Tibial artery (tissue), 4 donors: ENCODE measurements at regions of chr11 and their contacts with region 1.

Region 1: DNA sequence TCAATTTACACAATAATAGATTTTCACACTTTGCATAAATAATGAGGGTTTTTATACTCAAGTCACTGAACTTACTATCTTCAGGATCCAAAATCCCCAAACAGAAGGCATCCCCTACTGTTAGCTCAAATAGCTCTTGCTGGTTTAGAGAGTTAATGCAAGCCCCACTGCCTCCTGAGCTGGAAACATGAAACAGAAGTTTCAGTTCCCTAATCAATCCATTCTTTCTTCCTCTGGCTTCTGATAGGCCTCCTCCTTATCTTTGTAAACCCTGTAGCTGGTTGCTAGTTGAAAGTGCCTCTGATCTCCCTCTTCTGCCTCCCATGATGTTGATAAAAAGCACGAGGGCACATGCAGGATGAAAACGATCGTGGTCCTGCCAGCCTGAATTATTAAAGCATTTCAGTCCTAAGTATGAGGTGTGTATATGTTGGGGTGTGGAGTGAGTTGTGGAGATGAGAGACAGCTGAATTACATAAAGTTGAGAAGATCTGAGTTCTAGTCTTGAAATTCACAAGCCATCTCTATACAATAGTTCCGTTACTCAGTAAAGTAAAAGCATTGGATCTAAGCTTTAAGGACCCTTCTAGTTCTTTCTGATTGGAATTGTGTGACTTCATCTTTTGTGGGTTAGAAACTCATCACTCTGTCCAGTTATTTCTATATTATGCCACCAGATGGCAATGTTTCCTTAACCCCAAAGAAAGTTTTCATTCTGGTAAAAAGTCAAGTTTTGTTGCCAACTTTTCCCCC is 35.0 kb upstream of the EHF start:
- DNase-seq: no peak
- H3K4me3 ChIP-seq: no peak overlapping the region
- H3K27ac ChIP-seq: no peak overlapping the region
- H3K4me1 ChIP-seq: peaks cover 0 to 8% (median 2%) of the 10 kb centered on the region in 4 donors
- H3K27me3 ChIP-seq: peaks cover 0 to 7% of the 10 kb centered on the region in 2 donors
- CTCF ChIP-seq: peak; percentile 60 to 75

Region 2: GRCh38 chr11:34449013-34449412 is 136.9 kb before region 1 on chr11:
- intact Hi-C with region 1: no loop called
- DNase-seq: no peak
- H3K4me3 ChIP-seq: no peak overlapping the region
- H3K27ac ChIP-seq: no peak overlapping the region
- H3K4me1 ChIP-seq: no peaks in the 10 kb centered on the region
- H3K27me3 ChIP-seq: no peaks in the 10 kb centered on the region
- CTCF ChIP-seq: no peak

Region 3: DNA sequence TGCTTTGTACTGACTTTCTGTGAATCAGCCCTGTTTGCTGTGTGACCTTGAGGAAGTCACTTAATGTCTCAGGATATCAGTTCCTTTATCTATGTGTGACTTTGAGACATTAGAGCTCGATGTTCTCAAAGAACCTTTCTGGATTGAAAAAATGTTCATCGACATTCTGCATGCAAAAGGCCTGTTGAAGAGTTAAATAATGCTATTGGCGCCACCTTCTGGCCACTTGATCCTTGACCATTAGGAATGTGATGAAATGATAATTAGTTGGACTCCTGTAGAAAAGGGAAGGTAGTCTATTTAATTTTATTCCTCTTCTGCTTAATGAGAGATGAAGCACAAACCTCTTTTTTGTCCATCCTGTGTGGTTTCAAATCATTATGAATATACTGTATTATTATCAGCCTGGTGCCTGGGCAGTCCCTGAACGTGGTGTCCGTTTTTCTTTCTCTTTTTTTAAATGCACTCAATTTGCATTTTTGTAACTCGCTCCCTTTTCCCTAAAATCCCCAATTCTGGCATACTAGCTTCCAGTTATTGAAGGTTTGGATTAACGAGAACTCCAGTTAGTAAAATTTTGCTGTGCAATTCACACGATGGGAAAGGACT is 93.0 kb before region 1 on chr11:
- intact Hi-C with region 1: no loop called
- DNase-seq: peak in 1 of 2 donors; percentile 79
- H3K4me3 ChIP-seq: no peak overlapping the region
- H3K27ac ChIP-seq: no peak overlapping the region
- H3K4me1 ChIP-seq: no peaks in the 10 kb centered on the region
- H3K27me3 ChIP-seq: peaks cover 0 to 16% of the 10 kb centered on the region in 2 donors
- CTCF ChIP-seq: peak; percentile 43 to 56

Region 4: GRCh38 chr11:34890812-34891211 is 304.9 kb after region 1 on chr11:
- intact Hi-C with region 1: loop called (anchors 10 kb)
- DNase-seq: no peak
- H3K4me3 ChIP-seq: no peak overlapping the region
- H3K27ac ChIP-seq: no peak overlapping the region
- H3K4me1 ChIP-seq: no peaks in the 10 kb centered on the region
- H3K27me3 ChIP-seq: no peaks in the 10 kb centered on the region
- CTCF ChIP-seq: peak; percentile 12 to 51

Region 5: GRCh38 chr11:35305670-35306382 is 719.9 kb after region 1 on chr11:
- intact Hi-C with region 1: loop called (anchors 10 kb)
- DNase-seq: no peak
- H3K4me3 ChIP-seq: no peak overlapping the region
- H3K27ac ChIP-seq: no peak overlapping the region
- H3K4me1 ChIP-seq: peaks cover 0 to 13% (median 6%) of the 10 kb centered on the region in 4 donors
- H3K27me3 ChIP-seq: no peaks in the 10 kb centered on the region
- CTCF ChIP-seq: peak; percentile 16 to 25

Region 6: GRCh38 chr11:35404388-35404775 is 818.5 kb after region 1 on chr11:
- intact Hi-C with region 1: loop called (anchors 10 kb)
- DNase-seq: no peak
- H3K4me3 ChIP-seq: no peak overlapping the region
- H3K27ac ChIP-seq: no peak overlapping the region
- H3K4me1 ChIP-seq: no peaks in the 10 kb centered on the region
- H3K27me3 ChIP-seq: peaks cover 0 to 12% of the 10 kb centered on the region in 2 donors
- CTCF ChIP-seq: peak in 1 of 2 experiments; percentile 21